ENCODE measurements at regions of chr15 and their contacts with region 1.

Region 1: DNA sequence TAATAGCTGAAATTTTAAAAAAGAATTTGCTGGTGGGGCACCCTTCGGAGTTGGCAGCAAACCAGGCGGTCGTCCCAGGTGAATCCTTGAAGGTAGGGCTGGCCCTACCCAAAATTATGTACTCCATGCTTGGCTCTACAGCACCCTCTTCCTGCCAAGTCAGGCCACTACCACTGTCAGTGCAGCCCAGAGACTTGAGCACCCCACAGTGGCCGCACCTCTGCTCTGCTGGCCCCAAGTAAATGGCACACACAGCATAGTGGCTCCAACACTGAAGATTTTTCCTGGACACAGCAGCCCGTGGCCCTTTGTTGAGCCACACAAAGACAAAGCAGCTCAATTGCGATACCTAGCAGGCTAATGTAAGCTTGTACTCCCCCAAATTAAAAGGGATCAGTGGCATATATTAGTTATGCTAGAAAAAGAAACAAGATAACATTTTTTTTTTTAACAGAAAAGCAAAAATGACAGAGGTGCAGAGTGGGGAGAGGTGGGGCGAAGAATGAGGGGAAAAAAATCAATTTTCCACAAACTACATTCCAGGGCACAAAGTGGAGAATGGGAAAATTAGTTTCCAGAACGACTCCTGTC is 250.5 kb downstream of the UACA start:
- DNase-seq: peak; percentile 91
- H3K4me3 Mint-ChIP-seq: no peak overlapping the region
- H3K27ac Mint-ChIP-seq: no peak overlapping the region
- H3K4me1 Mint-ChIP-seq: peaks cover 31% of the 10 kb centered on the region
- H3K27me3 Mint-ChIP-seq: peaks cover 31% of the 10 kb centered on the region

Region 2: GRCh38 chr15:70474471-70475396 is 38.1 kb before region 1 on chr15:
- intact Hi-C with region 1: loop called (anchors 5 kb)
- DNase-seq: peak; percentile 75
- H3K4me3 Mint-ChIP-seq: peak overlapping the region; percentile 53
- H3K27ac Mint-ChIP-seq: peak overlapping the region; percentile 25
- H3K4me1 Mint-ChIP-seq: peaks cover 40% of the 10 kb centered on the region
- H3K27me3 Mint-ChIP-seq: peaks cover 51% of the 10 kb centered on the region

Region 3: GRCh38 chr15:70528270-70528706 is 15.4 kb after region 1 on chr15:
- intact Hi-C with region 1: loop called (anchors 2 kb)
- DNase-seq: peak; percentile 92
- H3K4me3 Mint-ChIP-seq: peak overlapping the region; percentile 79
- H3K27ac Mint-ChIP-seq: peak overlapping the region; percentile 74
- H3K4me1 Mint-ChIP-seq: peaks cover 43% of the 10 kb centered on the region
- H3K27me3 Mint-ChIP-seq: peaks cover 5% of the 10 kb centered on the region